ENCODE measurements at regions of chr12 and their contacts with region 1.

Region 1: GRCh38 chr12:57983146-57983857 is 41.9 kb downstream of the ATP23 start:
- DNase-seq: no peak
- ATAC-seq: peak in 1 of 4 donors; percentile 66
- H3K4me3 ChIP-seq: no peak overlapping the region
- H3K27ac ChIP-seq: no peak overlapping the region
- H3K4me1 ChIP-seq: peaks cover 5% of the 10 kb centered on the region
- H3K27me3 ChIP-seq: no peaks in the 10 kb centered on the region
- CTCF ChIP-seq: peak; percentile 74

Region 2: DNA sequence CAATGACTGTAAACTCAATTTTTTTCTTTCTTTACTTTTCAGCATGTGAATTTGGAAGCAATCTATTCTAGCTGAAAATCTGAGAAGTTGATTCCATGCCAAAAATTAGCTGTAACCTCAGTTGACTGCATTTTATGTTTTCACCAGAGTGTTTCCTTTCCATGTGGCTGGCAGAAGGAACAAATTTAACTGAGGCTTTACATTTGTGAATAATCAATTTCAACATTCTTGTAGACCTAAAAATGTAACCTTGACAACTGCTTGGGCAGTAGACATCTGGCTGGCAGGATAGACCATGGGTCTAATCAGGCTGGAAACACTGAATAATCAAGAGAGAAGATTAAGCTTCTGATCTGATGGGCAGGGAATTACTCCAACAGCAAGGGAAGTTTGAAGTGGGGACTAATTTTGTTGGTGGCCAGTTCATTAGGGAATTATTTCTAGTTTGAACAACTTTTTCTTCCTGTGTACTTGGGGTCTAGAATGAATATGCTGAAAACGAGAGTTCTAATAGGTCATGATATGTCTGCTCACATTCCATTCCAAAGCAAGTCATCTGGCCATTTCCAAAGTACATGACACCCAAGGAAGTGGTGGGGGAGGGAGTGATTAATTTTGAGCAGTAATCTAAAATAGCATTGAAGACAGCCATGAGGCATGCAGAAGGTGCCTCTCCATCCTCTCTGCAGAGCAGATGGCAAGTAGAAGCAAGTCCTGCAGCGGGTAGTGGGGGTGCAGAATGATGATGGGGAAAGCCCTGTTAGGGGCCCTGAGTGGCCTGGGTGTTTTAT is 26.3 kb after region 1 on chr12:
- intact Hi-C with region 1: no loop called
- DNase-seq: no peak
- ATAC-seq: no peak
- H3K4me3 ChIP-seq: no peak overlapping the region
- H3K27ac ChIP-seq: no peak overlapping the region
- H3K4me1 ChIP-seq: no peaks in the 10 kb centered on the region
- H3K27me3 ChIP-seq: no peaks in the 10 kb centered on the region
- CTCF ChIP-seq: no peak

Region 3: DNA sequence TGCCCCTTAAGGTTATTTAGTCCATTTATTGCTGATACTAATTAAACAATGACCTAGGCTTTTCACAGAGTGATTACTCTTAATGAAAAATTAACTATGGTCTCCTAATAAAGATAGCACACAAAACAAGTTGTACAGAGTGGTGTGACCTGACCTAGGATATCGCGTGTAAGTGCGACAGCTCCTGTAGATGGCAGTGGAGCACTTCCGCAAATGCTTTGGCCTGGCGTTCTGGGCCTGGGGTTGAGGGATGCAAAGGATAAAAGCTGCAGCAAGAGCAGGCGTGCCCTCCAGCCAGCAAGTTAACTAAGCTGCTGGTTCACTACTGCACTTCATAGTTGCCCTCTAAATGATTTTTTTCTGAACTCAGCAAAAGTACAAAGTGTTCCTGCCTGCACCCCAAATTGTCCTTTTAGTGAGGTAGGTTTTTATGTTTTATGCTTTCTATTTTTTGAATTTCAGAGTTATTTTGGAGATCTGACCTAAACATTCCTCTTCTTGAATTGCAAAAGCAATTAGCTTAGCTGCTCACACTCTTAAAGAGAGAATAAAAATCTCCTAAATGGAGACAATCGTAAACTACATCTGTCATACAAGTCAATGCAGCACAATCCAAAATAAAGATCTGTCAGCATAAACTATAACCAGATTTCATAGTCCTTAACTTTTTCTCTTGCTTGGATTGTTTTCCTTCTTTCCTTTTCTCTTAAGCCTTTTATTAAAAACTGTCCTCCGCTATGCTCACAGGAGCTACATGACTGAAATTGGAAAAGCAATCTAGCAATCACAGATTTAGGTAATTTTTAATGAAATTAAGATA is 557.4 kb after region 1 on chr12:
- intact Hi-C with region 1: loop called in 1 of 2 experiments (anchors 5 kb)
- DNase-seq: peak; percentile 58 to 64
- ATAC-seq: peak; percentile 80 to 88 (median 84)
- H3K4me3 ChIP-seq: no peak overlapping the region
- H3K27ac ChIP-seq: no peak overlapping the region
- H3K4me1 ChIP-seq: no peaks in the 10 kb centered on the region
- H3K27me3 ChIP-seq: no peaks in the 10 kb centered on the region
- CTCF ChIP-seq: peak; percentile 78

Measured in psoas muscle (tissue), 8 donors.